ENCODE measurements at regions of chr15 and their contacts with region 1.

Region 1: DNA sequence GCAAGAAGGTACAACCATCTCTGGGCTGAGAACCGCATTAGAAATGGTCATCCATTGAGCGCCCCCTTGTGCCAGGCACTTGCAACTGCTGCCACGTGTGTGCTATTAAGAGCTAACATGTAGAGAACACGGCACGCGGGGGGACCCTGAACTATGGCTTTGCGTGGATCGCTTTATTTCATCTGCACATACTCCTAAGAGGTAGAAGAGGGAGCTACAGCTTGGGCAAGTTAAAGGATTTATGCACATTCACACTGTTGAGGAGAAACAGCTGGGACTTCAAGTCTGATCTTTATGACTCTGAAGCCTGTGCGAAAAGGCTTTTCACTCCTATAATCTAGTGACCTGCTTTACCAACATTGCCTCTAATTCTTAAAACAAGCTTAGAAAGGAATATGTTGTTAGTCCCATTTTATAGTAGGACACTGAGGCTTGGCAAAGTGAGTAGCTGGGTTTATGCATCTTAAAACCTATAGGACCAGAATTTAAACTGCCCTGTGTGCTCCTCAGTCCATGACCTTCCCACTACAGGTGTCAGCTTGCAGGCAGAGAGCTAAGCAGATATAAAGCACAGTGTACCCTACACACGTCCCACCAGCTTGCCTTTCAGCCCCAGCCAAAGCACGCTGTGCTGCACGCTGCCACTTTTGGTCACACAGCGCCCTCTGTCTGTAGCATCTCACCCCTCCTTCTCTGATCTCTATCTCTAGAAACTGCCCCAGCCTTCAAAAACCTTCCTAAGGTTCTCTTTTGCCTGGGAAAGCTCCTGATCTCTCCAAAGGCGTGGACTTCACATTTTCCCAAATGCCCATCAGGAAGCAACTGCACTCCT is 57.8 kb downstream of the STARD5 start:
- DNase-seq: peak; percentile 71 to 92 (median 79)
- ATAC-seq: peak; percentile 89
- H3K4me3 ChIP-seq: peak overlapping the region; percentile 21
- H3K4me3 Mint-ChIP-seq: peak overlapping the region; percentile 66
- H3K27ac ChIP-seq: no peak overlapping the region
- H3K27ac Mint-ChIP-seq: no peak overlapping the region
- H3K4me1 ChIP-seq: peaks cover 23% of the 10 kb centered on the region
- H3K4me1 Mint-ChIP-seq: peaks cover 35% of the 10 kb centered on the region
- H3K27me3 ChIP-seq: no peaks in the 10 kb centered on the region
- H3K27me3 Mint-ChIP-seq: no peaks in the 10 kb centered on the region
- CTCF ChIP-seq: peak; percentile 75

Region 2: GRCh38 chr15:80977627-80978036 is 288.5 kb before region 1 on chr15:
- CTCF ChIA-PET with region 1: interaction called, 4 read pairs
- POLR2A ChIA-PET with region 1: no interaction called
- intact Hi-C with region 1: loop called (anchors 5 kb)
- DNase-seq: peak in 10 of 14 experiments; percentile 21 to 71 (median 42)
- ATAC-seq: peak; percentile 51
- H3K4me3 ChIP-seq: no peak overlapping the region
- H3K4me3 Mint-ChIP-seq: no peak overlapping the region
- H3K27ac ChIP-seq: no peak overlapping the region
- H3K27ac Mint-ChIP-seq: peak overlapping the region; percentile 34
- H3K4me1 ChIP-seq: peaks cover 13% of the 10 kb centered on the region
- H3K4me1 Mint-ChIP-seq: peaks cover 50% of the 10 kb centered on the region
- H3K27me3 ChIP-seq: no peaks in the 10 kb centered on the region
- H3K27me3 Mint-ChIP-seq: no peaks in the 10 kb centered on the region
- CTCF ChIP-seq: no peak

Region 3: GRCh38 chr15:81091889-81092558 is 174.1 kb before region 1 on chr15:
- CTCF ChIA-PET with region 1: no interaction called
- POLR2A ChIA-PET with region 1: no interaction called
- intact Hi-C with region 1: no loop called
- DNase-seq: no peak
- ATAC-seq: no peak
- H3K4me3 ChIP-seq: no peak overlapping the region
- H3K4me3 Mint-ChIP-seq: no peak overlapping the region
- H3K27ac ChIP-seq: no peak overlapping the region
- H3K27ac Mint-ChIP-seq: no peak overlapping the region
- H3K4me1 ChIP-seq: no peaks in the 10 kb centered on the region
- H3K4me1 Mint-ChIP-seq: no peaks in the 10 kb centered on the region
- H3K27me3 ChIP-seq: peaks cover 10 to 21% of the 10 kb centered on the region in 2 experiments
- H3K27me3 Mint-ChIP-seq: peaks cover 53% of the 10 kb centered on the region
- CTCF ChIP-seq: no peak

Region 4: DNA sequence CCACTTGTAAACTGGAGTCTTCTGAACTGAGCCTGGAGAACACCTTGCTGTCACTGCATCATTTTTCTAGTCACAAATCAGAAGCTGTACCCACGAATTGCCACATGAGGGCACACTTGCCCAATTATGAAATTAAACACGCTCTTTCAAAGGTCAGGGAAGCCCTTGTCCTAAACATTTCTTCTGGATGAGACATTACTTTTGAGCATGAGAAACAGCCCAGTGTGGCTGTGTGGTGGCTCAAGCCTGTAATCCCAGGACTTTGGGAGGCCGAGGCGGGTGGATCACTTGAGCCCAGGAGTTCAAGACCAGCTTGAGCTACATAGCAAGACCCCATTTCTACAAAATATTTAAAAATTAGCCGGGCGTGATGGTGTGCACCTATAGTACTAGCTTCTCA is 159.6 kb before region 1 on chr15:
- CTCF ChIA-PET with region 1: interaction called, 34 read pairs
- POLR2A ChIA-PET with region 1: no interaction called
- intact Hi-C with region 1: loop called (anchors 1 kb)
- DNase-seq: peak in 13 of 14 experiments; percentile 4 to 64 (median 20)
- ATAC-seq: peak; percentile 24
- H3K4me3 ChIP-seq: no peak overlapping the region
- H3K4me3 Mint-ChIP-seq: no peak overlapping the region
- H3K27ac ChIP-seq: no peak overlapping the region
- H3K27ac Mint-ChIP-seq: no peak overlapping the region
- H3K4me1 ChIP-seq: no peaks in the 10 kb centered on the region
- H3K4me1 Mint-ChIP-seq: no peaks in the 10 kb centered on the region
- H3K27me3 ChIP-seq: peaks cover 5 to 7% of the 10 kb centered on the region in 2 experiments
- H3K27me3 Mint-ChIP-seq: peaks cover 35% of the 10 kb centered on the region
- CTCF ChIP-seq: peak; percentile 79

Region 5: GRCh38 chr15:81189583-81190283 is 76.4 kb before region 1 on chr15:
- CTCF ChIA-PET with region 1: no interaction called
- POLR2A ChIA-PET with region 1: no interaction called
- intact Hi-C with region 1: no loop called
- DNase-seq: no peak
- ATAC-seq: no peak
- H3K4me3 ChIP-seq: no peak overlapping the region
- H3K4me3 Mint-ChIP-seq: no peak overlapping the region
- H3K27ac ChIP-seq: no peak overlapping the region
- H3K27ac Mint-ChIP-seq: no peak overlapping the region
- H3K4me1 ChIP-seq: no peaks in the 10 kb centered on the region
- H3K4me1 Mint-ChIP-seq: no peaks in the 10 kb centered on the region
- H3K27me3 ChIP-seq: peaks cover 0 to 10% of the 10 kb centered on the region in 2 experiments
- H3K27me3 Mint-ChIP-seq: peaks cover 25% of the 10 kb centered on the region
- CTCF ChIP-seq: no peak

Region 6: DNA sequence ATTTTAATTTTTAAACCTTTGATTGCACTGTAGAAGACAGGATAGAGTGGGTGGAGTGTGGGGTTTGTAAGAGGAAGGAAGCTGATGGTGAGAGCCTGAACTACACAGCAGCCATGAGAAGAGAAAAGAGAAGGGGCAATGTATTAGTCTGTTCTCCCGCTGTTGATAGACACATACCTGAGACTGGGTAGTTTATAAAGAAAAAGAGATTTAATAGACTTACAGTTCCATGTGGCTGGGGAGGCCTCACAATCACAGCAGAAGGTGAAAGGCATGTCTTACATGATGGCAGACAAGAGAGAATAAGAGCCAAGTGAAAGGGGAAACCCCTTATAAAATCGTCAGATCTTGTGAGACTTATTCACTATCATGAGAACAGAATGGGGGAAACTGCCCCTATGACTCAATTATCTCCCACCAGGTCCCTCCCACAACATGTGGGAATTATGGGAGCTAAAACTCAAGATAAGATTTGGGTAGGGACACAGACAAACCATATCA is 20.5 kb after region 1 on chr15:
- CTCF ChIA-PET with region 1: interaction called, 13 read pairs
- POLR2A ChIA-PET with region 1: interaction called, 4 read pairs
- intact Hi-C with region 1: no loop called
- DNase-seq: peak in 3 of 14 experiments; percentile 65 to 68 (median 68)
- ATAC-seq: peak; percentile 94
- H3K4me3 ChIP-seq: peak overlapping the region; percentile 5
- H3K4me3 Mint-ChIP-seq: peak overlapping the region; percentile 45
- H3K27ac ChIP-seq: peak overlapping the region; percentile 80 to 84
- H3K27ac Mint-ChIP-seq: peak overlapping the region; percentile 92
- H3K4me1 ChIP-seq: peaks cover 71% of the 10 kb centered on the region
- H3K4me1 Mint-ChIP-seq: peaks cover 79% of the 10 kb centered on the region
- H3K27me3 ChIP-seq: no peaks in the 10 kb centered on the region
- H3K27me3 Mint-ChIP-seq: no peaks in the 10 kb centered on the region
- CTCF ChIP-seq: no peak

Region 7: GRCh38 chr15:81312790-81313543 is 46.8 kb after region 1 on chr15:
- CTCF ChIA-PET with region 1: interaction called, 7 read pairs
- POLR2A ChIA-PET with region 1: interaction called, 11 read pairs
- intact Hi-C with region 1: no loop called
- DNase-seq: peak in 2 of 14 experiments; percentile 59 to 69
- ATAC-seq: no peak
- H3K4me3 ChIP-seq: no peak overlapping the region
- H3K4me3 Mint-ChIP-seq: no peak overlapping the region
- H3K27ac ChIP-seq: peak overlapping the region in 1 of 2 donors; percentile 67
- H3K27ac Mint-ChIP-seq: peak overlapping the region; percentile 92
- H3K4me1 ChIP-seq: peaks cover 68% of the 10 kb centered on the region
- H3K4me1 Mint-ChIP-seq: peaks cover 85% of the 10 kb centered on the region
- H3K27me3 ChIP-seq: no peaks in the 10 kb centered on the region
- H3K27me3 Mint-ChIP-seq: no peaks in the 10 kb centered on the region
- CTCF ChIP-seq: no peak

Region 8: DNA sequence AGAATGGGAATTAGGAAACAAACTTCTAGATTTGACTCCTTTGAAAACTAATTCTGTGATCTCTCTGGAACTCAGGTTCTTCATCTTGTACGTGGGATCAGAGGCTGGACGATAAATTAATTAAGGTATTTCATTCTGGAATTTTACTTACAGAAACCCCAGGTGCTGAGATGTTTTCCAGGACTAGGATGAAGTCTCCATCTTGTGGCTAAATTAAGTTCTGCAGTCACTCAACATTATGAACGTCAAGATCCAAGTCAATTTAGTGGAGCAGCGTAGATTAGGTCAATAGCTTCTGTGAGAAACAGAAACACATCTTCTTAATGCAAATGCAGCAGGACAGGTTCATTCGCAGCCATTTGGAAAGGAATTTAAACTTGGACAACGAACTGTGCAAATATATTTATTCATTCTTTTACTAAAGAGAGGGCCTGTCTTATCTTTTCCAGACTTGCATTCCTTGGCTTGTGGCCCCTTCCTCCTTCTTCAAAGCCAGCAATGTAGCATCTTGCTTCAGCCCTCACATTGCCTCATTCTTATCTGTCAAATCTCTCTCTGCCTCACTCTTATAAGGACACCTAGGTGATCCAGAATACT is 134.6 kb after region 1 on chr15:
- CTCF ChIA-PET with region 1: interaction called, 11 read pairs
- POLR2A ChIA-PET with region 1: no interaction called
- intact Hi-C with region 1: loop called in 1 of 2 experiments (anchors 2 kb)
- DNase-seq: peak in 4 of 14 experiments; percentile 5 to 77 (median 66)
- ATAC-seq: peak; percentile 41
- H3K4me3 ChIP-seq: no peak overlapping the region
- H3K4me3 Mint-ChIP-seq: no peak overlapping the region
- H3K27ac ChIP-seq: no peak overlapping the region
- H3K27ac Mint-ChIP-seq: no peak overlapping the region
- H3K4me1 ChIP-seq: no peaks in the 10 kb centered on the region
- H3K4me1 Mint-ChIP-seq: no peaks in the 10 kb centered on the region
- H3K27me3 ChIP-seq: no peaks in the 10 kb centered on the region
- H3K27me3 Mint-ChIP-seq: peaks cover 6% of the 10 kb centered on the region
- CTCF ChIP-seq: peak; percentile 81

Region 9: DNA sequence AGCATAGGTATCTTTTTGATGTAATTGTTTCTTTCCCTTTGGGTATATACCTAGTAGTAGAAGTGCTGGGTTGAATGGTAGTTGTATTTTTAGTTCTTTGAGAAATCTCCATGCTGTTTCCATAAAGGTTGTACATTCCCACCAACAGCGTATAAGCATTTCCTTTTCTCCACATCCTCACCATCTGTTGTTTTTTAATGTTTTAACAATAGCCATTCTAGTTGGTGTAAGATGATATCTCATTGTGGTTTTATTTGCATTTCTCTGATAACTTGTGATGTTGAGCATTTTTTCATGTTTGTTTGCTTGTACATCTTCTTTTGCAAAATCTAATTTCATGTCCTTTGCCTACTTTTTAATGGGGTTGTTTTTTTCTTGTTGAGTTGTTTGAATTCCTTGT is 187.9 kb after region 1 on chr15:
- CTCF ChIA-PET with region 1: no interaction called
- POLR2A ChIA-PET with region 1: no interaction called
- intact Hi-C with region 1: no loop called
- DNase-seq: no peak
- ATAC-seq: no peak
- H3K4me3 ChIP-seq: no peak overlapping the region
- H3K4me3 Mint-ChIP-seq: no peak overlapping the region
- H3K27ac ChIP-seq: no peak overlapping the region
- H3K27ac Mint-ChIP-seq: no peak overlapping the region
- H3K4me1 ChIP-seq: no peaks in the 10 kb centered on the region
- H3K4me1 Mint-ChIP-seq: peaks cover 10% of the 10 kb centered on the region
- H3K27me3 ChIP-seq: no peaks in the 10 kb centered on the region
- H3K27me3 Mint-ChIP-seq: no peaks in the 10 kb centered on the region
- CTCF ChIP-seq: no peak

Measured in CD4-positive, alpha-beta T cell (primary cell).